ENCODE measurements at regions of chr10 and their contacts with region 1.

Region 1: DNA sequence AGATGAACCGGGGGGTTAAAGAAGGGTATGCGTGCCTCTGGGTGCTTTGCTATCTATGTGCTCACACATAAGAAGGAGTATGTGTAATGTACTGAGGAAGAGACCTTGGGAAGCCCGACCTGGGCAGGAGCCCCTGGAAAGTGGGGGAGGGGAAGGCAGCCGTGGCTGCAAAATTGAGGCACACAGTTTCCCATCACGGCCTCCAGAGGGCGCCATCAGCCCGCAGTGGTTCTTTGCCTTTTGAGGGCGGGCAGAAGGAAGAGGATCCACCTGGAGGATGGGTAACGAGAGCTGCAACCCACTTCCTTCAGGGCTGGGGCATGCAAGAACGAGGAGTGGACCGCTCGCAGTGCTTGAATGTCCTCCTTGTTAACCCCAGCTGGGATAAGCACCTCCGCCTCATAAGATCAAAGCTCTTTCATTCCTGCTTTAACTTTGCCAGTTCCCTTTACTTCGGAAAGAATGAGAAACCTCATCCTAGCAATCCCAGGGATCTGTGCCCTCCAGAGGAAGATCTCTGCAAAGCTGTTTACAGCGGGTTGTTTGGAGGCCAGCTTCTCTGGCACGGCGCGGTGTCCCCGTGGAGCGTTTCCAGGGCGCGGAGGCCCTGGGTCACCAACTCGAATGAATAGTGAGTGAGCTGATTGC is 77.9 kb downstream of the PCGF5 start:
- DNase-seq: peak; percentile 80
- H3K4me3 Mint-ChIP-seq: peak overlapping the region; percentile 28
- H3K27ac Mint-ChIP-seq: no peak overlapping the region
- H3K4me1 Mint-ChIP-seq: no peaks in the 10 kb centered on the region
- H3K27me3 Mint-ChIP-seq: no peaks in the 10 kb centered on the region
- CTCF ChIP-seq: peak; percentile 96

Region 2: DNA sequence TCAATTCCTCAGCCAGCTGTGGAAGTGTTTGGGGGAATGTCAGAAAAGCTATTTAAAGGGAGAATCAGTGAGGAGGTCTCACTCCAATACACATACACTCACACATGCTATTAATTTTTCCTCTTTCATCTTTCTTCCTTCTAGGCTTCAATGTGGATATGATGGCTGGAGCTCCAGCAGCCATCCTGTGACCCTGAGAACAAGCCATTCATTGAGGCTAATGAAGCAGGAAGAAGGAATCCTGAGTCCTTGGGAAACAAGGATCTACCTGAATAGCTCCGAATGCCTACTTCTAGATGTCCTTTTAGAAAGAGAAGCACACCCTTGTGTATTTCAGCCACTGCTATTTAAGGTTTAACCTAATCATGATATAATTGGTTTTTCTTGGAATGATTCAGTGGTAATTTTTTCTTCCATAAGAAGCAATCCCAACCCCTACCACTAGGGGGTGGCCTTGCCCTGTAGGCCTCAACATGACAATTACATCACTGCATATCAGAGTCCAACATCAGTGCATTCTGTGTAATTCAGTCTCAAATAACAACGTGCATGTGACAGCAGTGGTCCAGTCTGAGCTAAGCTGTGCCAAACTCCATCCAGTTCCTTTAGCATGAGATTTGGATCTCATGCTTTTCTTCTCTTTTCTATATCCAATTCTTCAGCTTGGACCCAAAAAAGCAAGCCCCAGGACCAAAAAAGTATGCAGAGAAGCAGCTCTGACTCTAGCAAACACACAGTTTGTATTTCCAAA is 292.2 kb before region 1 on chr10:
- CTCF ChIA-PET with region 1: interaction called, 3 read pairs
- POLR2A ChIA-PET with region 1: no interaction called
- intact Hi-C with region 1: loop called (anchors 1 kb)
- DNase-seq: peak; percentile 73
- H3K4me3 Mint-ChIP-seq: no peak overlapping the region
- H3K27ac Mint-ChIP-seq: no peak overlapping the region
- H3K4me1 Mint-ChIP-seq: no peaks in the 10 kb centered on the region
- H3K27me3 Mint-ChIP-seq: no peaks in the 10 kb centered on the region
- CTCF ChIP-seq: peak; percentile 80

Region 3: GRCh38 chr10:91349381-91349780 is 51.0 kb after region 1 on chr10:
- CTCF ChIA-PET with region 1: interaction called, 22 read pairs
- POLR2A ChIA-PET with region 1: interaction called, 3 read pairs
- intact Hi-C with region 1: no loop called
- DNase-seq: peak; percentile 46
- H3K4me3 Mint-ChIP-seq: peak overlapping the region; percentile 0
- H3K27ac Mint-ChIP-seq: peak overlapping the region; percentile 18
- H3K4me1 Mint-ChIP-seq: peaks cover 58% of the 10 kb centered on the region
- H3K27me3 Mint-ChIP-seq: no peaks in the 10 kb centered on the region
- CTCF ChIP-seq: no peak

Region 4: GRCh38 chr10:91374052-91374451 is 75.7 kb after region 1 on chr10:
- CTCF ChIA-PET with region 1: interaction called, 60 read pairs
- POLR2A ChIA-PET with region 1: interaction called, 5 read pairs
- intact Hi-C with region 1: loop called (anchors 1 kb)
- DNase-seq: no peak
- H3K4me3 Mint-ChIP-seq: no peak overlapping the region
- H3K27ac Mint-ChIP-seq: no peak overlapping the region
- H3K4me1 Mint-ChIP-seq: no peaks in the 10 kb centered on the region
- H3K27me3 Mint-ChIP-seq: no peaks in the 10 kb centered on the region
- CTCF ChIP-seq: no peak

Region 5: GRCh38 chr10:91409869-91410637 is 111.7 kb after region 1 on chr10 and contains the start of gene HECTD2:
- CTCF ChIA-PET with region 1: interaction called, 24 read pairs
- POLR2A ChIA-PET with region 1: interaction called, 4 read pairs
- intact Hi-C with region 1: no loop called
- DNase-seq: peak; percentile 72
- H3K4me3 Mint-ChIP-seq: peak within 1 kb of the TSS; percentile 95
- H3K27ac Mint-ChIP-seq: peak within 1 kb of the TSS; percentile 99
- H3K4me1 Mint-ChIP-seq: peaks cover 7% of the 10 kb centered on the region
- H3K27me3 Mint-ChIP-seq: no peaks in the 10 kb centered on the region
- CTCF ChIP-seq: peak; percentile 37
- total RNA-seq, gene HECTD2: 5.9 and 8.2 TPM in 2 replicates

Region 6: GRCh38 chr10:91632671-91633550 is 334.6 kb after region 1 on chr10 and contains the start of gene PPP1R3C:
- CTCF ChIA-PET with region 1: interaction called, 21 read pairs
- POLR2A ChIA-PET with region 1: interaction called, 5 read pairs
- intact Hi-C with region 1: loop called (anchors 1 kb)
- DNase-seq: peak; percentile 45
- H3K4me3 Mint-ChIP-seq: peak within 1 kb of the TSS; percentile 61
- H3K27ac Mint-ChIP-seq: no peak within 1 kb of the TSS
- H3K4me1 Mint-ChIP-seq: no peaks in the 10 kb centered on the region
- H3K27me3 Mint-ChIP-seq: no peaks in the 10 kb centered on the region
- CTCF ChIP-seq: no peak
- total RNA-seq, gene PPP1R3C: 0.30 and 0.47 TPM in 2 replicates

Measured in MCF 10A (cell line).